ENCODE measurements at regions of chr6 and their contacts with region 1.

Region 1: GRCh38 chr6:131949909-131950766 is 1.0 kb downstream of the CCN2 start:
- DNase-seq: peak; percentile 85
- H3K4me3 ChIP-seq: peak overlapping the region; percentile 42 to 77 (median 59)
- H3K27ac ChIP-seq: peak overlapping the region; percentile 27
- H3K4me1 ChIP-seq: peaks cover 46% of the 10 kb centered on the region
- H3K27me3 ChIP-seq: no peaks in the 10 kb centered on the region
- CTCF ChIP-seq: peak; percentile 31 to 66

Region 2: DNA sequence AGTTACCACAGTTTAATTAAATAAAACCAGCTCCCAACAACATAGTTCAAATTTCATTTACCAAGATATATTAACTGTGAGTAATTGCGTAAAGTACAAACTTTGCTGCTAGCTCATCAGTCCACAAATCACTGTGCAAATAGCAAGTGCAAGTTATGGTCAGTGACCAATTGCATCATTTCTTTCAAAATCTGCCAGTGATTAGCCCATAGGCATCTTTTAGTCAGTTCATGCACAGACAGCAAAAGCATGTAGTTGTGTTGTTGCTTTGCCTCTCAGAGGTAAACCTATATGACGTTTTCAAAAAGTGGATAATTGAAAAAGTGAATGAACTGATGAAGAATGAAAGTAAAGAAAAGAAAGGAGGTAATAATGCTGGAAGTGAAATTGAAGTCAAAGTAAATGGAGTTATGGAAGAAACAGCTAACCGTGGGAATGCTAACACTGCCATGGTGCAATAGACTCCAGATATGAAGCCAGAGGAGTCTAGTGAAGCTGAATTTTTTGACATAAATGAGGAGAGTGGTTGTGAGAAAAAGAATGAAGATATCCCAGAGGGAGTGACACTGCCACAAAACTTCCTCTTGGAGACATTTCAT is 105.8 kb before region 1 on chr6:
- CTCF ChIA-PET with region 1: no interaction called
- dilution Hi-C with region 1: no loop called
- in situ Hi-C with region 1: no loop called
- intact Hi-C with region 1: no loop called
- DNase-seq: no peak
- H3K4me3 ChIP-seq: no peak overlapping the region
- H3K27ac ChIP-seq: no peak overlapping the region
- H3K4me1 ChIP-seq: no peaks in the 10 kb centered on the region
- H3K27me3 ChIP-seq: peaks cover 2% of the 10 kb centered on the region
- CTCF ChIP-seq: no peak

Region 3: DNA sequence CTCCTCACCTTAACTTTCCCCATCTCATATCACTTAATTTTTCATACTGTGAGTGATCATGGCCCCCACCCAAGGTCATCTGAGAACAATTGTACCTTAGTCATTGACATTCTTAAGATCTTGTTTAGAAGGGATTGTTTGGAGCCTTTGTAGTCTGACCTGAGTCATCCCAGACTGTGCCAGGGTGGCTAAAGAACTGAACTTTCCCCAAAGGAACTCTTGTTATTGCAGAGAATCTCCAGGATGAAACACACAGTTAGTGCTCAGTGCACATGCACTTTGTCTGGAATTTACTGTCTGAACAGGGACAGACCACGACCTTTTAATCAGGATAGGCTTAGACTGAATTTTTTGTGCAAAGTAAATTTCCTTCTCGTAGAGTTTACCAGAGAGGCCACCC is 113.6 kb after region 1 on chr6:
- CTCF ChIA-PET with region 1: no interaction called
- dilution Hi-C with region 1: no loop called
- in situ Hi-C with region 1: no loop called
- intact Hi-C with region 1: loop called (anchors 5 kb)
- DNase-seq: peak; percentile 83
- H3K4me3 ChIP-seq: no peak overlapping the region
- H3K27ac ChIP-seq: peak overlapping the region; percentile 22
- H3K4me1 ChIP-seq: peaks cover 29% of the 10 kb centered on the region
- H3K27me3 ChIP-seq: no peaks in the 10 kb centered on the region
- CTCF ChIP-seq: no peak

Region 4: DNA sequence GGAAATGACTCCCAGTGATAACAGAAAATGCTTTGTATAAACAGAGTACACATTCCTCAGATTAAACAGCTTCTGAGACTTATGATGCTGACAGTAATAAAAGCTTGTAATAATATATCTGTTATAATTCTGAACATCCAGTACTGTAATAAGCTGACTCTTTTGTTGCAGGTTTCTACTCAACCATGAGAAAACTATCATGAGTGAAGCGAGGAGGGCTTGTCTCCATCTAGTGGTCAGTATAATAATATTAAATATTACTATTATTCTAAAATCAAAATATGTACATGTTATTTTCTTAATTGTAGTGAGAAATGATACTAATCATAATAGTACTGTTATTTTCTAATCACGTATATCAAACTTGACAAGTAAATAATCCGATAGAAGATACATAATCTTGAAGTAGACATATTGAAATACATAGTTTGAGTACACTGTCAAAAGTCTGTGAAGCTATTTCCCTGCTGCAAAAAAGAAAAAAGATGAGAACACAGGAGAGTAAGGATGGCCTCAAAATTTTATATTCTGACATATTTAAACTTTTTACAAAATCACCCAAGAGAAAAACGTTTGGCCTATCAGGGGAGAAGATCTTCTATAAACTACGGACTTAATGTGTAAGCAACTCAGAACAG is 268.0 kb after region 1 on chr6:
- CTCF ChIA-PET with region 1: interaction called, 11 read pairs
- dilution Hi-C with region 1: no loop called
- in situ Hi-C with region 1: no loop called
- intact Hi-C with region 1: no loop called
- DNase-seq: no peak
- H3K4me3 ChIP-seq: no peak overlapping the region
- H3K27ac ChIP-seq: no peak overlapping the region
- H3K4me1 ChIP-seq: no peaks in the 10 kb centered on the region
- H3K27me3 ChIP-seq: no peaks in the 10 kb centered on the region
- CTCF ChIP-seq: peak; percentile 32 to 56

Measured in mammary epithelial cell (primary cell).